Ascending aorta (tissue), 2 donors: ENCODE measurements at regions of chr2 and their contacts with region 1.

Region 1: DNA sequence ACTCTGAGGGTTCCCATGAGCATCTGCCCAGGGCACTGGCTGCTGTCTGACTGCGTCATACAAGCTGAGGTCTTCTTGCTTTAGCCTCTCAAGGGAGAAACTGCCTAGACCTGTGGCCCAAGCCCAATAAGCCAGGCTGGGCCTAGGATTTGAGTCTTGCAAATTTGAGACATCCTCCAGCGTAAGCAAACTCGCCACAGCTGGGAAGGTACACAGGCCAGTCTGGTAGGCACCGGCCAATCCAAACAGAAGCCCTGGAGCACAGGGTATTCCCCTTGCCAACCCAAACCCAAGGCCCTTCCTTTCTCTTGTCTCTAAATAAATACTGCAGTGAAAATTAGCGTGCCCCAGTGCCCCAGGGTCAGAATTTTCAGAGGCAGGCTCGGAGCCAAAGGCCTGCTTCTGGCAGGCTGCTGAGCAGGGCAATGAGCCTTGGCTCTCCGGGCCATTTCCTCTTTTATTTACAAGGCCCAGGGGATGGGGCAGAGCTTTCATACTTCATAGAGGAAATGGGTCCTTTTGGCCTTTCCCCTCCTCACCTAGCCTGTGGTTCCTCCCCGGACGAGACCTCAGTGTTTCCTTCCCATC is 33.3 kb downstream of the POLR1A start:
- DNase-seq: peak in 1 of 2 donors; percentile 93
- H3K4me3 ChIP-seq: no peak overlapping the region
- H3K27ac ChIP-seq: peak overlapping the region; percentile 85 to 88
- H3K4me1 ChIP-seq: peaks cover 8 to 16% of the 10 kb centered on the region in 2 donors
- H3K27me3 ChIP-seq: no peaks in the 10 kb centered on the region
- CTCF ChIP-seq: no peak

Region 2: GRCh38 chr2:85728883-85729824 is 343.2 kb before region 1 on chr2:
- intact Hi-C with region 1: loop called (anchors 5 kb)
- DNase-seq: peak in 1 of 2 donors; percentile 95
- H3K4me3 ChIP-seq: no peak overlapping the region
- H3K27ac ChIP-seq: peak overlapping the region in 1 of 2 donors; percentile 37
- H3K4me1 ChIP-seq: peaks cover 0 to 11% of the 10 kb centered on the region in 2 donors
- H3K27me3 ChIP-seq: no peaks in the 10 kb centered on the region
- CTCF ChIP-seq: peak; percentile 95 to 99 (median 97)

Region 3: DNA sequence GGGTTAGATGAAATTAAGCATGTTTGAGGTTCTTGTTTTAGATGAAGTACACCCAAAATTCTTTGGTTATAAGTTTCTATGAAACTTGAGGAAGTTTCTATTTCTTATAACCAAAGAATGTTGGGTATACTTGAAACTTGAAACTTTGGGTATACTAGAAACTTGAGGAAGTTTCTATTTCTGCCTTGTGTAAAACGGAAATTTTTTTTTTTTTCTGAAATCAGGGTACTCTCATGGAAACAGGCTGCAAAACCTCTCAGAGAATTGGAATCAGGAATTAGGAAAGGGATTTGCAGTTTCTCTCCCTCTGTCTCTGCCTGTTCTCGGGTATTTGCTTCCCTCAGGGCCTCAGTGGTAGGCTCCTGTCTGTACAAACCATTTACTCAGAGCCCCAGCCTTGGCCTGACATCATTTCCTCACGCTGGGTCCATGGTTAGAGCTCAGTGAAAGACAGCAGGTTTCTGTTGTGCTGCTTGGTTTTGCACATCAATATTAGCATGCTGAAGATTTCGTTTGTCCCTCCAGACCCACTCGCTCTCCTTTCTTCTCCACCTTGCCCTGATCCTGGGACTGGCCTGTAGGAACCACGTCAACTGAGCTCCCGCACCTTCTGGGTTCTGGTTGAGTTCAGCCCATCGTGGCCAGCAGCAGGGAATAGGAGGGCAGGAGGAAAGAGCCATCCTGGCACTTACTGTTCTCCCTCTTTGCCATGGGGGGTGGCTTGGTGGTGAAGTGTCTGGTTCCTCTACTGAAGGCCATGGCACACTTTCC is 73.1 kb before region 1 on chr2:
- intact Hi-C with region 1: loop called (anchors 5 kb)
- DNase-seq: peak in 1 of 2 donors; percentile 69
- H3K4me3 ChIP-seq: peak overlapping the region in 1 of 2 donors; percentile 37
- H3K27ac ChIP-seq: peak overlapping the region; percentile 92 to 95
- H3K4me1 ChIP-seq: peaks cover 36 to 60% of the 10 kb centered on the region in 2 donors
- H3K27me3 ChIP-seq: no peaks in the 10 kb centered on the region
- CTCF ChIP-seq: no peak

Region 4: GRCh38 chr2:86035883-86036668 is 36.3 kb before region 1 on chr2:
- intact Hi-C with region 1: loop called (anchors 2 kb)
- DNase-seq: peak; percentile 54 to 83
- H3K4me3 ChIP-seq: no peak overlapping the region
- H3K27ac ChIP-seq: peak overlapping the region; percentile 84 to 89
- H3K4me1 ChIP-seq: peaks cover 22 to 28% of the 10 kb centered on the region in 2 donors
- H3K27me3 ChIP-seq: no peaks in the 10 kb centered on the region
- CTCF ChIP-seq: peak in 2 of 3 experiments; percentile 15 to 17

Region 5: DNA sequence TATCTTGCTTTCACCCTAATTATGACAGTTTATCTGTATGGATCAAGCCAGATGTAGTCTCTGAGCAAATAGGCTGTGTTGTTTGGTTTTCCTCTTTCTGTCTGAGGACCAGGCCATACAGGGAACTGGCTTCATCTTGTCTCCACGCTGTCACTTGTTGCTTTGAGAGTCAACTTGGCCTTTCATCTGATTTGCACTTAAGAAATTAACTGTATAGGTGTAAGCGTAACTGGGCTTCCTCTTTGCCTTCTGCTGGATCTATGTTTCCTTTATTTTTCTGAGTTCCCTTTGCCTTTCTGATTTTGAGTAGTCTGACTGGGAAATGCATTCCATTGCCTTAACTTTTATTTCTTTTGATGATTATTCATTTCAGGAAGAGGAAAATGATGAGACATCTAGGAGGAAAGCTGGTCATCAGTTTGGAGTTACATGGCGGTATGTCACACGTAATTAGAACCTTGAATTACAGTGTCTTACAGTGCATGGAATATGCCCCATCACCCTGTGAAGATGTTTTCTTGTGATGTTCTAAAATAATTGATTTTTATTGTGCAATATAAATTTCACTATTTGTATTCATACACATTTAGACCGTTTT is 51.1 kb after region 1 on chr2:
- intact Hi-C with region 1: no loop called
- DNase-seq: no peak
- H3K4me3 ChIP-seq: no peak overlapping the region
- H3K27ac ChIP-seq: no peak overlapping the region
- H3K4me1 ChIP-seq: no peaks in the 10 kb centered on the region
- H3K27me3 ChIP-seq: no peaks in the 10 kb centered on the region
- CTCF ChIP-seq: no peak